SK-N-SH (cell line): ENCODE measurements at regions of chr17 and their contacts with region 1.

Region 1: DNA sequence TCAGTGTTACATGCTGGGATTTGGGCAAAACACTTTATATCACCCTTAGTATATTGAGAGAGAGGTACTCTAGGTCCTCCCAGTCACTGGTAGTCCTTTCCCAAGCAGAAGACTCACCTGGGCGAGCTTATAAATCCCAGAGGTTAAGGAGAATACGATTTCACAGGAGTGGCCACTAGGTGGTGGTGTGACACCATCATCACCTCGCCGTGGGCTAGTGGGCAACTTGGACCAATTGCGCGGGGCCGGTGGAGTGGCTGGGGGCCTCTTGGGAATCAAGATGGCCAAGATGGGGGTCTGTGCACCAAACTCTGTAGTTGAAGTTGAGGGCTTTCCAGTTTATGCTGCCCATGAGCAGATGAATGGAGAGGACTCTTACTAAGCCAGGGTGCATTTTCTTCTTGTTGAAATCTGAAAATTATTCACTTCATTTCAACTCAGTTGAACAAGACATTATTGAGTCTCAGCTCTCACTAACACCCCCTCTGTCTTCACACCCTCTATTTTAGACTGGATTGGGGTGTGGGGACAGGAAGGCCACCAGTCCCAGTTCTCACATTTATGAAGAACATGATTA is 38.2 kb upstream of the PIRT start:
- DNase-seq: peak; percentile 58
- H3K4me3 ChIP-seq: no peak overlapping the region; a peak in 1 of 4 replicates
- H3K27ac ChIP-seq: no peak overlapping the region
- H3K4me1 ChIP-seq: no peaks in the 10 kb centered on the region
- H3K27me3 ChIP-seq: no peaks in the 10 kb centered on the region
- CTCF ChIP-seq: peak; percentile 55
- EP300 ChIP-seq: no peak
- RAD21 ChIP-seq: peak; percentile 77

Region 2: DNA sequence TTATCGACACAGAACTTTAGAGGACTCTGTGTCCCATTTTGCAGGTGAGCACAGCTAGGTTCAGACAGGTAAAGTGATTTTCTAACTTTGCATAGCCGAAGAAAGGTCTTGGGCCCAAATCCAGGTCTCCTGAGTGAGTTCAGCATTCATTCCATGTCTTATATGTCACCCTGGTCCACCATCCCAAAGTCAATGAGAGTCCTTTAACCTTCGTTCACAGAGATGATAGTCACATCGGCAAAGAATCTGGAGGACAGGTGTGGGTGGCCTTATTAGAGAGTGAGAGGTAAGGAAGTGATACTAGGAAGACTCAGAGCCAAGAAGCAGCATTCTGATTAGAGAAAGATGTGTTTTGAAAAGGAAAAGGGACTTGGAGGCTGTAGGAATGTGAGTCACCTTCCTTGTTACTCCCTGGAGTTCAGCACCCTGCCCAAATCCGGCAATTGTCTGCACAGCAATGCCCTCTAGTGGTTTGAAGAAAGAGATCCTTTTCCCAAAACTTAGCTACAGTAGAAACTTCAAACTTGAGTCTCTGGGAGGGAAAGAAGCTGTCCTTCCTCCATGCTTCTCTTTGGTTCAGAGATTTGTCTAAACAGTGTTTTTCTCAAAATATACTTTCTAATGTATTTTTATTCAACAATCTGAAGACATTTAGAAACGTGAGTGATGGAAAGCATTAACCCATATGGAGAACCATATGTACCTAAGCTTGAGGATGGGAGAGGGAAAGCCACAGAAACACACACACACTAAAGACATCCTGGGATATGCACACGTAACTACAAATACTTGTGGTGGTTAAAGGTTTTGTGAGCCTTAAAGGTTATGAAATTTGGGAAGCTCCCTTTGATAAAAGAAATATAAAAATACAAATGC is 268.5 kb after region 1 on chr17:
- CTCF ChIA-PET with region 1: interaction called, 90 read pairs
- POLR2A ChIA-PET with region 1: no interaction called
- DNase-seq: peak; percentile 24
- H3K4me3 ChIP-seq: peak overlapping the region in 1 of 2 experiments; percentile 43; a peak in 1 of 4 replicates
- H3K27ac ChIP-seq: no peak overlapping the region
- H3K4me1 ChIP-seq: no peaks in the 10 kb centered on the region
- H3K27me3 ChIP-seq: no peaks in the 10 kb centered on the region
- CTCF ChIP-seq: peak; percentile 38
- EP300 ChIP-seq: no peak
- RAD21 ChIP-seq: peak; percentile 65